ENCODE measurements at regions of chr6 and their contacts with region 1.

Region 1: GRCh38 chr6:144482142-144482541 is 197.0 kb downstream of the UTRN start:
- DNase-seq: peak; percentile 89

Region 2: GRCh38 chr6:143845033-143845432 is 637.1 kb before region 1 on chr6:
- intact Hi-C with region 1: no loop called
- DNase-seq: no peak

Region 3: DNA sequence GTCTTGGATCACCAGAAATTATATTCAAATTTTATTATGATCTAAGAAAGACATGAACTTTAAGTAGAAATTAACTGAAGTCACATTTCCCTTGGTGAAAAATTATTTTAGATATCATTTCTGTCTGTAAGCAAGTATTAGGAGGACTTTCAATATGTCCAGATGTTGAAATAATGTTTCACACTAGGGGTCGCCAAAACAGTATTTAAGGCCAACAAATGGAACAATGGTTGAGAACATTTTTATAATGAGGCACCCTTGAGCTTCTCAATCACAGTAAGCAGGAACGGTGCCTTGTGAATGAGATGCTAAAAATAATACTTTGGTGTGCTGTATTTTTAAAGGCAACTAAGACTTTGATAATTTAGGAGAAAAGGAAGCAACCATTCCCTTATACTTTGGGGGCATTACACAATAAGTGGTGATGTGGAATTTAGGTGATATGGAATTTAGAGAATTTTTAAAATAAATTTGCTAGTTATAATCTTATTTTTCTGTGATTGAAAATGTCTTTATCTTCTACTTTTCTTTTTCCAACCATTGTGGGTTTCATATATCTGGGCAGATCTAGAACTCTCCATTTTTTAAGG is 377.1 kb before region 1 on chr6:
- intact Hi-C with region 1: loop called (anchors 5 to 10 kb)
- DNase-seq: no peak

Region 4: GRCh38 chr6:144284783-144285547 is 197.2 kb before region 1 on chr6 and contains the start of gene UTRN:
- intact Hi-C with region 1: loop called in 1 of 2 experiments (anchors 1 kb)
- DNase-seq: peak; percentile 94
- total RNA-seq, gene UTRN: 215 to 229 TPM